PC-9 (cell line): ENCODE measurements at regions of chr20 and their contacts with region 1.

Region 1: DNA sequence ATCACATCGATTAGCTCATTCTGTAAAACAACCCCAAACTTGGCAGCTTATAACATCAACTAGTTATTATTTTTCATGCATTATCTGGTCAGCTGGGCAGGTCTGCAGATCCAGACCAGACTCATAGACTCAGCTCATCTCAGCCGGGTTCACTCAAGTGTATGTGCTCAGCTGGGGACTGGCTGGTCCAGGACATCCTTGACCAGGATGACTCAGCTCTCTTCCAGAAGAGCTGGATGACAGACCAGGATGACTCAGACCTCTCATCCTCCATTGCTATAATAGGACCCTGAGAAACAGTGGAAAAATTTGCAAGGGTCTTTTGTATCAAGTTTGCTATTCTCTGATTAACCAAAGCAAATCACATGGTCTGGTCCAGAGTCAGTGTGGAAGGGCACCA is 312.5 kb upstream of the PLCB4 start:
- DNase-seq: no peak
- H3K4me3 ChIP-seq: no peak overlapping the region
- H3K27ac ChIP-seq: no peak overlapping the region
- H3K4me1 ChIP-seq: no peaks in the 10 kb centered on the region
- H3K27me3 ChIP-seq: no peaks in the 10 kb centered on the region
- CTCF ChIP-seq: no peak

Region 2: GRCh38 chr20:9059931-9060330 is 303.5 kb after region 1 on chr20:
- CTCF ChIA-PET with region 1: interaction called, 15 read pairs
- POLR2A ChIA-PET with region 1: no interaction called
- intact Hi-C with region 1: no loop called
- DNase-seq: no peak
- H3K4me3 ChIP-seq: no peak overlapping the region
- H3K27ac ChIP-seq: no peak overlapping the region
- H3K4me1 ChIP-seq: no peaks in the 10 kb centered on the region
- H3K27me3 ChIP-seq: no peaks in the 10 kb centered on the region
- CTCF ChIP-seq: no peak

Region 3: DNA sequence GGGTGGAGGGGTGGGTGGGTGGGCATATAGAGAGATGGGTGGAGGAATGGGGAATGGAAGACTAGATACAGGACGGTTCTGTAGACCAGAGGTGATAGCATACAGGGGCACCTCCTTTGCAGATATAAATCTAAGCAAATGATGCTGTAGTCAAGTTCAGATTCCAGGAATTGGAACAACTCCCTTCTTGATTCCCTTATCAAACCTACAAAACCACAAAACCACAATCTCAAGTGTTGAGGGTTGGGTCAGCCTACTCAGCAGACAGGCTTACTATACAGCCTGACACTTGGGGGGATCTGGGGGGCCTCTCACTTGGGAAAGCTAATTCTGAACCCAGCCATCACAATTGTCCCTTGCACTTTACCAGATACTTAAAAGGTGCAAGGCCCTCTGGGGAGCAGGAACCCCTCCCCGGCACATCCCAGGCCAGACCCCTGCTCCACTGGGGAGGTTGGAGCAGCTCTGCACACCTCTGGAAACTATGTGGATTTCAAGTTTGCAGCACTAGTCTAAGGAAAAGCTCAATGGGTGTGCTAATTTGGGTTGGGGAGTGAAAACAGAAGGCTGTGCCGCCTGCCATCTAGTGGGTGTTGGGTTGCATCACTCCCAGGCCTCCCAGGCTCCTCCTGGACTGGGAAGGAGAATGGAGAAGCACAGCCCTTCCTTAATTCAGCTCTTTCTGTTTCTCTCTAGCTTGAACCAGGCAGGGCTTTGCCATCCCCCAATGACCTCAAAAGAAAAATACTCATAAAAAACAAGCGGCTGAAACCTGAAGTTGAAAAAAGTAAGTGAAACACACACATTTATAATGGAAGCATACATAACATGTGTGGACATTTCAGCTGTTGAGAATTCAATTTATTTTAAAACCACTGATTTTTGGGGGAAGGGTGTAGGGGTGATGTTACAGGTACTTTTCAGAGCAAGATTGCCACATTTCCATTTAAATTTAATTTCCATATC is 636.8 kb after region 1 on chr20:
- CTCF ChIA-PET with region 1: interaction called, 7 read pairs
- POLR2A ChIA-PET with region 1: no interaction called
- intact Hi-C with region 1: loop called (anchors 1 kb)
- DNase-seq: peak in 1 of 2 experiments; percentile 54
- H3K4me3 ChIP-seq: no peak overlapping the region
- H3K27ac ChIP-seq: no peak overlapping the region
- H3K4me1 ChIP-seq: no peaks in the 10 kb centered on the region
- H3K27me3 ChIP-seq: no peaks in the 10 kb centered on the region
- CTCF ChIP-seq: peak; percentile 70